ENCODE measurements at regions of chr4 and their contacts with region 1.

Region 1: DNA sequence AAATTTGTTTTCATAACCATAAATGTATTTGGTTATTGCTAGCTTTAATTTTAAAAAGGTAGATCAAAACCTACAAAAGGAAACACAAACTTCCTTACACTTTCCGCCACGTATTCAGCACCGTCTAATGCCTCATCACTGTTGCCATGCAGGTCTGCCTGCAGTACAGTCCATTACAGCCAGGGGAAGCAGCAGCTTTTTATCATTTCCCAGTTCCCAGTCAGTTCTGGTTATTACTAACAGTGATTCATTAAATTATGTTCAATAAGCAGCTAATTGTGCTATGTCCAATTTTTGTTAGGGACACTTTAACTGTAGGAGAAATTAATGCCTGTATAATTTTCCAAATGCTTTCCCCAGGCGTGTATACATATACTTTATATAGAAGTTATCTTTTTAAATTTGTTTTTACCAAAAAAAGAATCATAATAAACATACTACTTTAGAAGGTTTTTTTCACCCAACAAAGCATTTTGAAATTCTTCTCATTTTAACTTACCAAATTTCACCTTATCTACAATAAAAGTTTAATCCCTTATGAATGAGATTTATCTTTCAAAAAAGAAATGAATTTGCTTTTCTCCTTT is 93.3 kb downstream of the ANXA3 start:
- DNase-seq: no peak
- ATAC-seq: peak; percentile 98
- H3K4me3 Mint-ChIP-seq: peak overlapping the region; percentile 26
- H3K27ac Mint-ChIP-seq: peak overlapping the region; percentile 53
- H3K4me1 Mint-ChIP-seq: peaks cover 70% of the 10 kb centered on the region
- H3K27me3 Mint-ChIP-seq: no peaks in the 10 kb centered on the region
- CTCF ChIP-seq: peak; percentile 39

Region 2: DNA sequence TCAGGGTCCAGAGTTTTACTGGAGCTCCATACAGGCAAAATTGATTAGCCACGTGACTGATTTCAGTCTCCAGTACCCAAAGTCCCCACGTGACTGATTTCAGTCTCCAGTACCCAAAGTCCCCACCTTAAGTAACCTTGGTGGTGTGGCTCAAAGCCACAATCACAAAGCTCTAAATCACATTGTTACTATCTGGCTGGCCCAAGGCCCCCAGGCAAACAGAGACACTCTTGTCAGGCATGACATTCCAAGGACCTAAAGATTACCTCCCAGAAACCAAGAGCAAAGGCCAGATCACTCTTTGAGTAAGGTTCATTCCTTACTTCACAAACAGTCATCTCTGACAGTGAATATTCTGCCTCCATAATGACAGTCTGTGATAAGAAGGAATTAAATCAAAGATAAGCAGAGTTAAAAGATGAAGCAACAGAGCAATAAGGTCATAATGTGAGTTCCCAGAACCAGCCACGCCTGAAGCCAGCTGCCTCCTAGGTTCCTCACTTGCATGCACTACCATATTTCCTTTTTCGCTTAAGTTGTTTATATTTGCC is 14.8 kb before region 1 on chr4:
- CTCF ChIA-PET with region 1: interaction called, 13 read pairs
- POLR2A ChIA-PET with region 1: interaction called, 7 read pairs
- intact Hi-C with region 1: loop called (anchors 2 kb)
- DNase-seq: no peak
- ATAC-seq: peak; percentile 13
- H3K4me3 Mint-ChIP-seq: peak overlapping the region; percentile 7
- H3K27ac Mint-ChIP-seq: peak overlapping the region; percentile 94
- H3K4me1 Mint-ChIP-seq: peaks cover 88% of the 10 kb centered on the region
- H3K27me3 Mint-ChIP-seq: no peaks in the 10 kb centered on the region
- CTCF ChIP-seq: no peak

Region 3: DNA sequence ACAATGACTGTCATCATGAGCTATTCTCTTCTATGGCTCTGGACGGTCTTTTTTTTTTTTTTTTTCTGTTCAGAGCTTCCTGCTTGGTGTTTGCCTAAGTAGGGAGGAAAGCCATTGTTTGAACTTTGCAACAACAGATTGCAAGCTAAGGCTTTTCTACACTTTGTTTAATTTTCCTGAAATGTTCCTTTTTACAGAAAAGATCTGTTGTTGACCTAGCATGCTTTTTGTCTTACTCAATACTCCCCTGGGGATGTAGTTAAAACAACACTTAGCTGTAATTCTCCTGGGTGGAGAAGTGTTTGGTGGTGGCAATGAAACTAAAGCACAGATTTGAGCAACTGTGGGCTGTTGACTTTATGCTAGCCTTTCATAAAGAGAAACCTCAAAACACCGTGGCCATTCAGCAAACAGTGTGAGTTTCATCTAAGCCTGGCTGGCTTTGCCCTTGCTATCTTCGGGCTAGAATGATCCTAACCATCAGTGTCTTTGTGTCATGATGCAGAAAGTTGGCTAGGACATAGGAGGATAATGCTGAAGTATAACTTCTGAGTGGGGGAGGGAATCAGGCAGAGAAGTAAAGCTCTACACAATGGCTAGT is 17.2 kb after region 1 on chr4:
- CTCF ChIA-PET with region 1: interaction called, 15 read pairs
- POLR2A ChIA-PET with region 1: interaction called, 10 read pairs
- intact Hi-C with region 1: loop called (anchors 1 kb)
- DNase-seq: no peak
- ATAC-seq: peak; percentile 51
- H3K4me3 Mint-ChIP-seq: peak overlapping the region; percentile 57
- H3K27ac Mint-ChIP-seq: peak overlapping the region; percentile 83
- H3K4me1 Mint-ChIP-seq: peaks cover 78% of the 10 kb centered on the region
- H3K27me3 Mint-ChIP-seq: no peaks in the 10 kb centered on the region
- CTCF ChIP-seq: no peak

Region 4: DNA sequence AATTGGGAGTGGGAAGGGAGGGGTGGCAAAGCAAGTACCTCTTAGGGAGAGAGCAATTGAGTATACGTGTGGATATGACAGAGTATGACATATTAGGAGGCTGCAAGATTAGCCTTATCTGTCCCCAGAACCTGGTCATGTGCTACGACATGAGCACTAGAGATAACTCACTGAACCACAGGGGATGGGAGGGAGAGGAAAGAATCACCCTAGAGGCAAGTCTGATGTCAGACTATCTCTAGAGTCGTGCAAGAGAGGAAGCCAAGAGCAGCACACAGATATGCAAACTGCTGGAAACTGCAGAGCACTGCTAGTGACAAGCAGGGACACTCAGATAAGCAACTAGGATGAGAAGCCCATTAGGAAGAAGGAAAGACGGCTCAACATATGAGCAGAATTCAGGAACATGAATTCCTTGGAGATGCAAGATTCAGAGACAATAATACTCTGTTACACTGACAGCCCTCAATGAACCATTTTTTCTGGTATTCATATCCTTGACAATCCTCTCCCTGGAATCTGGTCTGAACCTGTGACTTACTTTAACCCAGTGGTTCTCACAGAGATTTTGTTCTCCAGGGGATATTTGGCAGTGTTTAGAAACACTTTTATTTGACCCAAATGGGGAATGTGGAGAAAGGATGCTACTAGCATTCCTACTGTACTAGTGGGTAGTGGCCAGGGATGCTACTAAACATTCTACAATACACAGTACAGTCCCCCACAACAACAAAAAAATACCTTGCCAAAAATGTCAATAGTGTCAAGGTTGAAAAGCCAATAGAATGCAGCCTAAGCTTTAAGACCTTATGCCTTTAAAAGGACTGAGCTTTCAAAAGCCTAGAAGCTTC is 47.4 kb after region 1 on chr4:
- CTCF ChIA-PET with region 1: interaction called, 4 read pairs
- POLR2A ChIA-PET with region 1: no interaction called
- intact Hi-C with region 1: loop called (anchors 2 kb)
- DNase-seq: no peak
- ATAC-seq: peak; percentile 98
- H3K4me3 Mint-ChIP-seq: no peak overlapping the region
- H3K27ac Mint-ChIP-seq: peak overlapping the region; percentile 2
- H3K4me1 Mint-ChIP-seq: peaks cover 23% of the 10 kb centered on the region
- H3K27me3 Mint-ChIP-seq: no peaks in the 10 kb centered on the region
- CTCF ChIP-seq: no peak

Region 5: DNA sequence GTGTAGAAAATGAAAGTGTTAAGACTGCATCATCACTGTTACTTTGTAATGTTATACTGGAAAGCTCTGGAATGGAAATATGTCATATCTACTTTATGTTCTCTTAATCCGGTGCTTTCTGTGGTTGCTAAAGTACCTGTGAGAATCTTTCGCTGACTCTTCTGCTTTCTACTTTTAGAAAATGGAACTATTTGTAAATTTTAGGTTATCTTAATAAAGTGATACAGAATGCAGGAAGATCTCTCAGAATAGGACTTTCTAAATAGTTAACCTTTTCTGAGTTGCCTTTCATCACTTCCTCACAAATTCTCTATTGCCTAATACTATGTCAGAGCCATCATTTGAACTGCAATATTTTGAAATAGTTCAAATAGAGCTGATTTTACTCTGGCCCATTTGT is 200.6 kb after region 1 on chr4:
- CTCF ChIA-PET with region 1: interaction called, 4 read pairs
- POLR2A ChIA-PET with region 1: no interaction called
- intact Hi-C with region 1: loop called (anchors 1 kb)
- DNase-seq: no peak
- ATAC-seq: peak; percentile 28
- H3K4me3 Mint-ChIP-seq: peak overlapping the region; percentile 38
- H3K27ac Mint-ChIP-seq: peak overlapping the region; percentile 50
- H3K4me1 Mint-ChIP-seq: peaks cover 40% of the 10 kb centered on the region
- H3K27me3 Mint-ChIP-seq: no peaks in the 10 kb centered on the region
- CTCF ChIP-seq: no peak

Measured in activated B cell treated with CpG ODN at 0.5 μM for 24 hours (primary cell).